ENCODE measurements at regions of chr6 and their contacts with region 1.

Region 1: DNA sequence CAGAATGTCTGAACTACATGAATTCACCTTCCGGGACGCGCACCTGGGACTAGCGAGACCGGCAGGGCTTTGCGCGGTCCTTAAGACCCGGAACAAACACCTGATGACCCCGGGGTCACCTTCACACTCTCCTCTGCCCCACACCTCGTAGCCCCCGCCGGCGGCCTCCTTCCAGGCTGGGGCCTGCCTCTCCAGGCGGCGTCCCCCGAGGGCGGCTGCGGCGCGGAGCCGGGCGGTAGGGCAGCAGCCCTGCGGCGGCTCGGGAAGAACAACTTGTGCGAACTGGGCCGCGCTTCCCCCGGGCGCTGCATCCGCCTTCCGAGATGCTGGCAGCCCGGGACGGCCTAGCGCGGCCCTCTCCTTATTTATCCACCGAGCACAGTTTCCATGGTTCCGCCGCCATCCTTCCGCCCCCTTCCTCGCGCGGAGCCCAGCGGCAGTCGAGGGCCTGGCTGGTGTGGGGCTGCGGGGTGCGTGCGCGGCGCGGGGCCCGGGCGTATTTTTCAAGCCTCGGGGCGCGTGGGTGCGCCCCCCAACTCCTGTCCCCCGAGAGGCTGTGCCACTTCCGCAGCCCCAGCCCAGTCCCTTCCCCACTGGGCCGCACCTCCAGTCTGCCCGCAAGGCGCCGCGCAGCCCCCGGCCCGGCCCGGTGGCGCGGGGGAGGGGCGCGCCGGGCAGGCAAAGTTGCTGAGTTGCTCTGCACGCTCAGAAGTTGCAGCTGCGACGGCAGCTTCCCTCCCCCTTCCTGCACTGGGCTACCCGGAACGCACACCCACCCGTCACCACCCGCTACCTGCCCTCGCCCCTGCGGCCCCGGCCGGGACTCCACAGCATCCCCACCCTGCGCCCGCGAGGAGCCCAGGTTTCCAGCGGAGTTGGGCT is 56.3 kb upstream of the RREB1 start:
- DNase-seq: peak; percentile 52 to 61
- H3K4me3 ChIP-seq: peak overlapping the region; percentile 67
- H3K27ac ChIP-seq: peak overlapping the region; percentile 93
- H3K4me1 ChIP-seq: peaks cover 18% of the 10 kb centered on the region
- H3K27me3 ChIP-seq: no peaks in the 10 kb centered on the region
- CTCF ChIP-seq: no peak

Region 2: DNA sequence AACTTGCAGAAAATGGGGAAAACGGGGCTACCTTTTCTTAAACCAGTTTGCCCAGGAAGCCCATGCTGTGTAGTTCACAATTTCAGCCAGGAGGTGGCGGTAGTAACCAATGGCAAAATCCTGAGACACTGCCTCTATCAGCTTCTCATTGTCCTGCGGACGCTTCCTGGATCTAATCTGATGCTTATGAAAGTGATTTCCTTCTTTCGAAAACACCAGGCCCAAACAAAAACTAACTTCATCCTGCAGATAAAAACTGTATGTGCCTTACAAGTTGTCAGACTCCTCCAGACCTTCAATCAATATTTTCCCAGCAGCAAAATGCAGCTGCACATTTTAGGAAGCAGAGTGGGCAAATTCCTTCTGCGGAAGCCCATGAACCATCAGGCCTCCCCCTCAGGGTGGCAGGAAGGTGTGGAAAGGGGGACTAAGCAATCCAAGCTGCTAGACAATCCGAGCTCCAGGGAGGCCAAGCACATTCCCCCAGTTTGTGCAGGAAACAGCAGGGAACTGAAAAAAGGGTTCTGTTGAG is 374.5 kb before region 1 on chr6:
- CTCF ChIA-PET with region 1: no interaction called
- POLR2A ChIA-PET with region 1: no interaction called
- intact Hi-C with region 1: loop called (anchors 5 kb)
- DNase-seq: peak; percentile 68 to 82
- H3K4me3 ChIP-seq: no peak overlapping the region
- H3K27ac ChIP-seq: no peak overlapping the region
- H3K4me1 ChIP-seq: peaks cover 33% of the 10 kb centered on the region
- H3K27me3 ChIP-seq: no peaks in the 10 kb centered on the region
- CTCF ChIP-seq: peak; percentile 92

Region 3: DNA sequence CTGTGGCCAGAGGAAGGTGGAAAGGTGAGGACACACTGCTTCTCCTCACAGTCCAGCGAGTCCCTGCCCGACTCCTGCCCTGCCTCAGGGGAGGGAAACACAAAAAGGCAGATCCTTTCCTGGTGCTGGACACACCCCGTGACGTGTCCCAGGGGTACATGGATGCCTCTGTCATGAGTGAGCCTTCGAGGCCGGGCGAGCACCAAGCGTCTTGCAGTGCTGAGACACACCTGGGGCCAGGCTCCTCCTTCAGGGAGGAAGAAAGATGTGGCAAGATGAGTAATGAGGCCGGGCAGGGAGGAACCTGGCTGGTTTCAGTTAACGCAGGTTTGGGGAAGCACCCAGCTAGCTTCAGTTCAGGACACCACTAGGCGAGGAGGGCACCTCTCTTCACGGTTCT is 247.9 kb before region 1 on chr6:
- CTCF ChIA-PET with region 1: no interaction called
- POLR2A ChIA-PET with region 1: no interaction called
- intact Hi-C with region 1: loop called (anchors 5 kb)
- DNase-seq: peak; percentile 94 to 97
- H3K4me3 ChIP-seq: no peak overlapping the region
- H3K27ac ChIP-seq: peak overlapping the region; percentile 98
- H3K4me1 ChIP-seq: peaks cover 29% of the 10 kb centered on the region
- H3K27me3 ChIP-seq: no peaks in the 10 kb centered on the region
- CTCF ChIP-seq: no peak

Region 4: DNA sequence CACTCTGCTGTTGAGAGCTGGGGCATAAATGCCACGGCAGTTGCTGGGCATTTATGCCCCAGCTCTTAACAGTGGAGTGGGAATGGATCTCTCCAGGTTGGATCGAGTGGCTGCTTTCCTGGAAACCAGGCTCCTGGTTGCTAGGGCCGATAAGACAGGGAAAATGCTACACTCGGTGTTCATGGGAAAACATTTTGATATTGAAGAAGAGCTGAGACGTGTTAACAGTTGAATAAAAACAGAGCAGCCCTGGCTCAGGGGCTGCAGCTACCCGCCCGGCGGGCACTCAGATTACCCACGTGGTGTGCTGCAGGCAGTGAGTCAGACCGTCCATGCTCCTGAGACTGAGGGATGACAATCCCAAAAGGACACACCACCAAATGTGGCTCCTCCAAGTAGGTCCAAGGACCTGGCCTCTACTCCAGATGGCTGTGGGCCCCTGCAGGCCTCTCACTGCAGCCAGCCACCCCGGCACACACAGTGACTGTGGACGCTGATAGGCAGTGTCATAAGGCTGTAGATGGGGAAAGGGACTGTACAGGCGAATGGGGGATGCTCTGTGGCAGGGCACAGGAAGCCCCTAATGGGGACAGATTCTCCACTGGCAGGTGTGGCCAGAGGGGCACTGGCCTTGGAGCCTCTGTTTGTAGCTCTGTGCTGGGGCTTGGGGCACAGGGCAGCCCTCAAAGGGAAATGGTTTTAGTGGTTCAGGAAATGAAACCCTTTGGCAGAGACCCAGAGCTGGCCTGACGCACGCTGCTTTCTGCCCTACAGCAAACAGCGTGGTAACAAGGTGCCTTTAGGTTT is 225.2 kb before region 1 on chr6:
- CTCF ChIA-PET with region 1: no interaction called
- POLR2A ChIA-PET with region 1: interaction called, 12 read pairs
- intact Hi-C with region 1: loop called (anchors 5 kb)
- DNase-seq: peak; percentile 57 to 59
- H3K4me3 ChIP-seq: no peak overlapping the region; the same call in 1 of the 2 replicates
- H3K27ac ChIP-seq: peak overlapping the region; percentile 77
- H3K4me1 ChIP-seq: peaks cover 57% of the 10 kb centered on the region
- H3K27me3 ChIP-seq: no peaks in the 10 kb centered on the region
- CTCF ChIP-seq: no peak

Region 5: GRCh38 chr6:6969761-6970223 is 81.7 kb before region 1 on chr6:
- CTCF ChIA-PET with region 1: no interaction called
- POLR2A ChIA-PET with region 1: no interaction called
- intact Hi-C with region 1: loop called (anchors 2 kb)
- DNase-seq: peak; percentile 91 to 97
- H3K4me3 ChIP-seq: no peak overlapping the region
- H3K27ac ChIP-seq: peak overlapping the region; percentile 73
- H3K4me1 ChIP-seq: peaks cover 44% of the 10 kb centered on the region
- H3K27me3 ChIP-seq: no peaks in the 10 kb centered on the region
- CTCF ChIP-seq: no peak

Region 6: DNA sequence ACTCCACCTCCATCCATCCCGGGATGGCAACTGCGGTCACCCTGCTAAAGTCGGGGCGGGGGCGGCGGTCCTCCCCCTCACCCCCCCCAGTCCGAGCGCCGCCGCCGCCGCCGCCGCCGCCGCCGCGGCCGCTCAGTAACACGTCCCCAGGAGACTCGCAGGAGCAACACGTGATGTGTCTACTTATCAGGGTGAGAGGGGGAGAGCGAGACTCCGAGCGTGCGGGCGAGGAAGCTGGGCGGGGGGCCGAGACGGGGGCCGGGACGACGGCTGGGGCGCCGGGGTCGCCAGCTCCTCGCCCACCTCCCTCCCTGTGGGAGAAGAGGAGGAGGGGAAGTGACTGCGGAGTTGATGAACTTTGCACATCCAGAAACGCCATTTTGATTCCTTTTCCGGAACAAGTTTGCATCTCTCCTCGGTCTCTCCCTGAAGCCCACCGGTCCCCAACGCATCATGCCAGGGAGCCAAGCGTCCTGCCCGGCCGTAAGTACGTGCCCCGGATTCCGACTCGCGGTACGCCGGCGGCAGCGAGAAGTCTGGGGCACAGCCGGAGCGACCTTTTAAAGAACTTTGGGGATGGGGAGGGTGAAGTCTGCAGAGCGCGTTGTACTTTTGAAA is 56.2 kb after region 1 on chr6 and contains the start of gene RREB1:
- CTCF ChIA-PET with region 1: interaction called, 6 read pairs
- POLR2A ChIA-PET with region 1: interaction called, 5 read pairs
- intact Hi-C with region 1: loop called (anchors 2 kb)
- DNase-seq: peak in 1 of 2 experiments; percentile 40
- H3K4me3 ChIP-seq: peak within 1 kb of the TSS; percentile 90
- H3K27ac ChIP-seq: peak within 1 kb of the TSS; percentile 69
- H3K4me1 ChIP-seq: peaks cover 29% of the 10 kb centered on the region
- H3K27me3 ChIP-seq: no peaks in the 10 kb centered on the region
- CTCF ChIP-seq: no peak
- total RNA-seq, gene RREB1: 29.2 and 38.4 TPM in 2 replicates

Region 7: DNA sequence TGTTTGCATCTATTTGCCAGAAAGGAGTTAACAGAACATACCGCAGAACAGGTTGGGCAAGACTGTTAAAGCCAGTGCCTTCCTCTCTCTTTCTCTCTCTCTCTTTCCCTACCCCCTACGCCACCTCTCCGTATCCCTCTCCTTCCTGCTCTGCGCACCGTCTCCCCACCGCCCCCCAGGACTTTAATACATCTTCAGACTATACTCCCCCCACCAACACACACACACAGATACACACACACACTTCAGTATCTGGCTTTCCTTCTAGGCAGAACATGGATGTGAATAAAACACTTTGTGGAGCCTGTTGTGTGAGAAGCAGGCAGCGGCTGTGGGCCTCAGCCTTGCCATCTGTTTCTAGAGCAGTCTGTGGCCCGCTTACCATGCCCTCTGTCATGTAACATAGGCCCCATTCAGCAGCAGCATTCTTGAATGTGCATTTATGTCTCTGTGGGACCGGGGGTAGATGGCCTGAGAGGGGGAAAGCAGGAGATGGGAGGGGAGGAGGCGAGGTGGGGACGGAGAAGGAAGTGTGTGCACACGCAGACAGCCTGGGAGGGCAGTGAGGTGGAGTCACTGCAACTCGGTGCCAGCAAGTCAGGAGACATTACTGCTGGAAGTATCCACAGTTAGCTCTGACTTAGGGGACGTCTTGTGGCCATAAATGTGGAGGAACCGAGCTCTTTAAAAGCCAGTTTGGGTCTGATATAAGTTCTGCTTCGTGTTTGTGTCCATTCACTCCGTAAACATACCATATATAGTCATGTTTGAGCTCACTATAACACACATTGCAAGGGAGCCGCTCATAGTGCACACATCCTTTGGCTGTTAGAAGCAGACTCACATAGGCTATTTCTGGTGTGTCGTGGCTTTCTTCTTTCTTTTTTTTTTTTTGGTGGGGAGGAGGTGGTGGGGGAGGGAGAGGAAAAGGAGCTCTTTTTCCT is 94.7 kb after region 1 on chr6:
- CTCF ChIA-PET with region 1: no interaction called
- POLR2A ChIA-PET with region 1: no interaction called
- intact Hi-C with region 1: loop called (anchors 2 kb)
- DNase-seq: peak; percentile 60 to 72
- H3K4me3 ChIP-seq: peak overlapping the region; percentile 66
- H3K27ac ChIP-seq: peak overlapping the region; percentile 91
- H3K4me1 ChIP-seq: peaks cover 72% of the 10 kb centered on the region
- H3K27me3 ChIP-seq: no peaks in the 10 kb centered on the region
- CTCF ChIP-seq: no peak

Region 8: GRCh38 chr6:7312616-7313504 is 261.4 kb after region 1 on chr6 and contains the start of gene SSR1:
- CTCF ChIA-PET with region 1: no interaction called
- POLR2A ChIA-PET with region 1: no interaction called
- intact Hi-C with region 1: no loop called
- DNase-seq: peak; percentile 84 to 98
- H3K4me3 ChIP-seq: peak within 1 kb of the TSS; percentile 94
- H3K27ac ChIP-seq: peak within 1 kb of the TSS; percentile 97
- H3K4me1 ChIP-seq: peaks cover 22% of the 10 kb centered on the region
- H3K27me3 ChIP-seq: no peaks in the 10 kb centered on the region
- CTCF ChIP-seq: no peak
- total RNA-seq, gene SSR1: 104 and 118 TPM in 2 replicates